Activated T-helper 2 cell treated with anti-CD3 and anti-CD28 coated beads, Interferon-gamma antibody, Interleukin-2, Interleukin-4, amounts not matched to agents 10 μg/mL and 5 μg/mL and 100 μg/mL, durations not matched to agents 14 hours and 24 hours and 36 hours (primary cell): ENCODE measurements at regions of chr17 and their contacts with region 1.

Region 1: DNA sequence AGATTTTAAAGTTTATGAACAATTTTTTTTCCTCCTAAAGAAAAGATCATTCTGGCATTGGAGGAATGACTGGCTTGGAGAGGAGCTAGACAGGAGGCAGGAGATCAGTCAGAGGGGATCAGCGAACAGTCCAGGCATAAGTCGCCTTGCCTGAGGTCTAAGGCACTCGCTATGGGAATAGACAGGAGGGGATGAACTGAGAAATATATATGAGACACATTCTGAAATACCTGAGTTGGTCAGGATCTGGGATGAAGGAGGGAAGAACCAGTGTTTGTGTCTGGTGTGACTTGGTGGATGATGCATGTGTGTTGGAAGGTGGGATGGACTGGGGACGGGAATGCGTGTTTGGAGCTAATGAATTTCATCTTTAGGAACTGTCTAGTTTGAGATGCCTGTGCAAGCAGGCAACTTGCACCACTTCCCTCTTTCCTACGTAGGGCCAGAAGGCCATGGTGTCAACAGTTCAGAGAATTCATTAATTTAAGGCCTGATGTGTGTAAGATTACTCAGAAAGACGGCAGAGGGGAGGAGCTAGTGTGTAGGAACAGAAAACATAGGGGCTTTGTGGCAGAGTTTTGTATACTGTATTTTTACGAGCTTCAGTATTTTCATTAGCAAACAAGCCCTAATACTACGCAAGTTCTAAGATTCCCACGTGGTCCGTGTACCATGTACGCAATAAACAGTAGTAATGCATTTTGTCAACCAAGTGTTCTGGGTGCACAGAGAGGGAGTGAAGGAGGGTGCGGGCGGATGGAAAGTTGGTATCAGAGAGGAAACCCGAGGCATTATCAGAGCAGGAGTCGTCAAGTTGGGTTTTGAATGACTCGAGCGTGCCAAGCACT is 825 bp downstream of the HEATR6 start:
- DNase-seq: no peak
- H3K4me3 Mint-ChIP-seq: peak overlapping the region; percentile 98
- H3K27ac Mint-ChIP-seq: peak overlapping the region; percentile 100
- H3K4me1 Mint-ChIP-seq: peaks cover 29% of the 10 kb centered on the region
- H3K27me3 Mint-ChIP-seq: no peaks in the 10 kb centered on the region

Region 2: DNA sequence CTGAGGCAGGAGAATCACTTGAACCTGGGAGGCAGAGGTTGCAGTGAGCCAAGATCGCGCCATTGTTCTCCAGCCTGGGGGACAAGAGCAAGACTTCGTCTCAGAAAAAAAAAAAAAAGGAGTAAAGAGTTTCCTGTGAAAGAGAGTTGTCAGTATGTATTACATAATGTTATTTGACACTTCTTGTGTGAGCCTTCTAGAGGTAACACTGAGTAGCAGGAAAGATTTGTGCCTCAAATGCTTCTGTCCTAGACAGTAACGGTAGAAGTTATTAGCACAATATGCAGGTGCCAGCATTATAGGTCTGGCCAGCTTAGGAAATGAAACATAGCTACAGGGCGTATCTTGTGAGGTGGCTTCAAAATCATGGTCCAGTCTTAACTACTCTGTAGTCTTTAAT is 178.8 kb before region 1 on chr17:
- intact Hi-C with region 1: no loop called
- DNase-seq: no peak
- H3K4me3 Mint-ChIP-seq: no peak overlapping the region
- H3K27ac Mint-ChIP-seq: no peak overlapping the region
- H3K4me1 Mint-ChIP-seq: peaks cover 22% of the 10 kb centered on the region
- H3K27me3 Mint-ChIP-seq: no peaks in the 10 kb centered on the region

Region 3: DNA sequence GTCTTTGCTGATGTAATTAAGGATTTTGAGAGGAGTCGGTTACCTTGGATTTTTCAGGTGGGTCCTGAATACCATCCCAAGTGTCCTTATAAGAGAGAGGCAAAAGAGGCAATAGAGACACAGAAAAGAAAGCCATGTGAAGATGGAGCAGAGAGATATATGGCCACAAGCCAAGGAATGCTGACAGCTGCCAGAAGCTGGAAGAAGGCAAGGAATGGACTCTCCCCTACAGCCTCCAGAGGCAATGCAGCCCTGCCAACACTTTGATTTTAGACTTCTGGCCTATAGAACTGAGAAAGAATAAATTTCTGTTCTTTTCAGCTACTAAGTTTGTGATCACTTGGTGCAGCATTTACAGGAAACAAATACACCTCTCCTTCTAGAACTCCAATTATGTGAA is 105.1 kb before region 1 on chr17:
- intact Hi-C with region 1: no loop called
- DNase-seq: no peak
- H3K4me3 Mint-ChIP-seq: no peak overlapping the region
- H3K27ac Mint-ChIP-seq: no peak overlapping the region
- H3K4me1 Mint-ChIP-seq: no peaks in the 10 kb centered on the region
- H3K27me3 Mint-ChIP-seq: peaks cover 2% of the 10 kb centered on the region

Region 4: DNA sequence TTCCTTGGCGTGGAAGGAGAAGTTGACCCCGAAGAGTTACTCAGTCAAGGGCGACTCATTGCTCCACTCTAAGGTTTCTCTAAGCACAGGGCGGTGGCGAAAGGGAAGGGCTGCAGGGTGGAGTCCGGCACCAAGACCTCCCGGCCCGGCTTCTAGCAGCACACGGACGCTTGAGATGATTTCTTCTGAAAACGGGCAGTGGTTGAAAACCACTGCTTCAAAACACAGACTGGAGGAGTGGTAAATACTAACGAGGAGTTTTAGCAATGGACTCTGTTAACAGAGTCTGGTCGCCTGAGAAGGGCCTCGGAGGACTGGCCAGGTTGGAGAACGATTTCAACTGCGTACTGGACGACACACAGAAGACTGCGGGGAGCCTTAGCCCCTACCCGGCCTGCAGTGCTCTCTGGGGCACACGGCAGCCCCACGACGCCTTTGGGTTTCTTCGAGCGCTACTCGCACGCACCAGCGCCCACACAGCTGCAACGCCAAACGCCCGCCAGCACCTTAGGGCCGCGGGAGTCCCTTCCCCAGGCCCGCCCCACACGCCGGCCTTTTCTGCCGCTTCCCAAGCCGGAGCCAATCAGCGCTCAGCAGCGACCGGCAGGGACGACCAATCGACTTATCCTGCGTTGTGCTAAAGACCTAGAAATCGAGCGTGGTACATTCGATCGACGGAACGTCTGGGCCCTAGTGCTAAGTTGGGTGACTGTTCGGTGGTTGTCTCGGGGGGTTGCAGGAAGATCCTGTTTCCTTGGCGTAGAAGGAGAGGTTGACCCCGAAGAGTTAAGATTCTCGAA is 57.5 kb after region 1 on chr17:
- intact Hi-C with region 1: loop called (anchors 2 kb)
- DNase-seq: peak; percentile 83
- H3K4me3 Mint-ChIP-seq: peak overlapping the region; percentile 83
- H3K27ac Mint-ChIP-seq: peak overlapping the region; percentile 63
- H3K4me1 Mint-ChIP-seq: peaks cover 33% of the 10 kb centered on the region
- H3K27me3 Mint-ChIP-seq: peaks cover 29% of the 10 kb centered on the region

Region 5: GRCh38 chr17:60161674-60162546 is 84.0 kb after region 1 on chr17:
- intact Hi-C with region 1: no loop called
- DNase-seq: no peak
- H3K4me3 Mint-ChIP-seq: no peak overlapping the region
- H3K27ac Mint-ChIP-seq: no peak overlapping the region
- H3K4me1 Mint-ChIP-seq: peaks cover 11% of the 10 kb centered on the region
- H3K27me3 Mint-ChIP-seq: peaks cover 2% of the 10 kb centered on the region